Transverse colon (tissue), 4 donors: ENCODE measurements at regions of chrX and their contacts with region 1.

Region 1: GRCh38 chrX:8879750-8880149 is 78.6 kb upstream of the FAM9A start:
- DNase-seq: peak; percentile 11
- H3K4me3 ChIP-seq: no peak overlapping the region
- H3K27ac ChIP-seq: no peak overlapping the region
- H3K4me1 ChIP-seq: no peaks in the 10 kb centered on the region
- H3K27me3 ChIP-seq: no peaks in the 10 kb centered on the region
- CTCF ChIP-seq: peak in 4 of 5 experiments; percentile 22 to 42 (median 38)
- EP300 ChIP-seq: no peak
- POLR2A ChIP-seq: no peak

Region 2: GRCh38 chrX:8907678-8908077 is 27.9 kb after region 1 on chrX:
- in situ Hi-C with region 1: no loop called
- intact Hi-C with region 1: loop called (anchors 2 kb)
- DNase-seq: no peak
- H3K4me3 ChIP-seq: no peak overlapping the region
- H3K27ac ChIP-seq: no peak overlapping the region
- H3K4me1 ChIP-seq: no peaks in the 10 kb centered on the region
- H3K27me3 ChIP-seq: no peaks in the 10 kb centered on the region
- CTCF ChIP-seq: no peak
- EP300 ChIP-seq: no peak
- POLR2A ChIP-seq: no peak

Region 3: GRCh38 chrX:8939344-8939743 is 59.6 kb after region 1 on chrX:
- in situ Hi-C with region 1: no loop called
- intact Hi-C with region 1: loop called (anchors 5 kb)
- DNase-seq: no peak
- H3K4me3 ChIP-seq: no peak overlapping the region
- H3K27ac ChIP-seq: no peak overlapping the region
- H3K4me1 ChIP-seq: no peaks in the 10 kb centered on the region
- H3K27me3 ChIP-seq: no peaks in the 10 kb centered on the region
- CTCF ChIP-seq: no peak
- EP300 ChIP-seq: no peak
- POLR2A ChIP-seq: no peak

Region 4: DNA sequence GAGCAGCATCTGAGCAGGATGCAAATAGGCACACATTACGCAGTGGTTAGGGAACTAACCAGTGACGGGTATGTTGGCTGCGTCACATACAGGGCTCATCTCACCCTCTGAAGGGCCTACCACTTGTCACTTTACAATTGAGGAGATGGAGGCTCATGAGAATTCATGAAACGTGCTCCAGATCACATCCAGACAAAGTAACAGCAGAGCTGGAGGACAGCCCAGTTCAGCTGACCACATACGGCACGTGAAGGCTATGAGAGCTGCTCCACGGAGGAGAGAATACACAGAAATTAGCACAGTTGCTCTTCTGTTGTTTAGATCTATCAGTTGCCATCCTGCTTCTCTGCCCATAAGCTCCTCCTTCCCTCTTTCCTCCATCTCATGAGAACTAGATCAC is 75.8 kb after region 1 on chrX:
- in situ Hi-C with region 1: no loop called
- intact Hi-C with region 1: no loop called
- DNase-seq: no peak
- H3K4me3 ChIP-seq: no peak overlapping the region
- H3K27ac ChIP-seq: no peak overlapping the region
- H3K4me1 ChIP-seq: no peaks in the 10 kb centered on the region
- H3K27me3 ChIP-seq: no peaks in the 10 kb centered on the region
- CTCF ChIP-seq: no peak
- EP300 ChIP-seq: no peak
- POLR2A ChIP-seq: no peak

Region 5: GRCh38 chrX:10014462-10015356 is 1135.0 kb after region 1 on chrX:
- in situ Hi-C with region 1: no loop called
- intact Hi-C with region 1: no loop called
- DNase-seq: peak; percentile 88
- H3K4me3 ChIP-seq: peak overlapping the region; percentile 9 to 71 (median 50)
- H3K27ac ChIP-seq: peak overlapping the region; percentile 83 to 91 (median 89)
- H3K4me1 ChIP-seq: peaks cover 3 to 23% (median 10%) of the 10 kb centered on the region in 4 donors
- H3K27me3 ChIP-seq: no peaks in the 10 kb centered on the region
- CTCF ChIP-seq: no peak
- EP300 ChIP-seq: no peak
- POLR2A ChIP-seq: peak; percentile 22